CD8-positive, alpha-beta T cell (primary cell): ENCODE measurements at regions of chr9 and their contacts with region 1.

Region 1: GRCh38 chr9:130607640-130608420 is 28.5 kb downstream of the FUBP3 start:
- DNase-seq: no peak
- ATAC-seq: no peak
- H3K4me3 ChIP-seq: no peak overlapping the region
- H3K4me3 Mint-ChIP-seq: no peak overlapping the region
- H3K27ac ChIP-seq: no peak overlapping the region
- H3K27ac Mint-ChIP-seq: no peak overlapping the region
- H3K4me1 ChIP-seq: no peaks in the 10 kb centered on the region
- H3K4me1 Mint-ChIP-seq: peaks cover 8% of the 10 kb centered on the region
- H3K27me3 ChIP-seq: no peaks in the 10 kb centered on the region
- H3K27me3 Mint-ChIP-seq: no peaks in the 10 kb centered on the region
- CTCF ChIP-seq: no peak

Region 2: GRCh38 chr9:130352081-130352480 is 255.7 kb before region 1 on chr9:
- CTCF ChIA-PET with region 1: no interaction called
- POLR2A ChIA-PET with region 1: no interaction called
- intact Hi-C with region 1: no loop called
- DNase-seq: no peak
- ATAC-seq: no peak
- H3K4me3 ChIP-seq: no peak overlapping the region
- H3K4me3 Mint-ChIP-seq: no peak overlapping the region
- H3K27ac ChIP-seq: no peak overlapping the region
- H3K27ac Mint-ChIP-seq: no peak overlapping the region
- H3K4me1 ChIP-seq: no peaks in the 10 kb centered on the region
- H3K4me1 Mint-ChIP-seq: no peaks in the 10 kb centered on the region
- H3K27me3 ChIP-seq: no peaks in the 10 kb centered on the region
- H3K27me3 Mint-ChIP-seq: no peaks in the 10 kb centered on the region
- CTCF ChIP-seq: no peak

Region 3: GRCh38 chr9:130578865-130579737 is 28.7 kb before region 1 on chr9 and contains the start of gene FUBP3:
- CTCF ChIA-PET with region 1: no interaction called
- POLR2A ChIA-PET with region 1: no interaction called
- intact Hi-C with region 1: loop called in 1 of 2 experiments (anchors 1 kb)
- DNase-seq: peak; percentile 62 to 94 (median 89)
- ATAC-seq: peak; percentile 71
- H3K4me3 ChIP-seq: peak within 1 kb of the TSS; percentile 74 to 94
- H3K4me3 Mint-ChIP-seq: peak within 1 kb of the TSS; percentile 87
- H3K27ac ChIP-seq: peak within 1 kb of the TSS; percentile 80 to 87
- H3K27ac Mint-ChIP-seq: peak within 1 kb of the TSS; percentile 94
- H3K4me1 ChIP-seq: peaks cover 27% of the 10 kb centered on the region
- H3K4me1 Mint-ChIP-seq: peaks cover 54% of the 10 kb centered on the region
- H3K27me3 ChIP-seq: no peaks in the 10 kb centered on the region
- H3K27me3 Mint-ChIP-seq: no peaks in the 10 kb centered on the region
- CTCF ChIP-seq: no peak
- total RNA-seq, gene FUBP3: 29.5 to 30.2 TPM